ENCODE measurements at regions of chr17 and their contacts with region 1.

Region 1: DNA sequence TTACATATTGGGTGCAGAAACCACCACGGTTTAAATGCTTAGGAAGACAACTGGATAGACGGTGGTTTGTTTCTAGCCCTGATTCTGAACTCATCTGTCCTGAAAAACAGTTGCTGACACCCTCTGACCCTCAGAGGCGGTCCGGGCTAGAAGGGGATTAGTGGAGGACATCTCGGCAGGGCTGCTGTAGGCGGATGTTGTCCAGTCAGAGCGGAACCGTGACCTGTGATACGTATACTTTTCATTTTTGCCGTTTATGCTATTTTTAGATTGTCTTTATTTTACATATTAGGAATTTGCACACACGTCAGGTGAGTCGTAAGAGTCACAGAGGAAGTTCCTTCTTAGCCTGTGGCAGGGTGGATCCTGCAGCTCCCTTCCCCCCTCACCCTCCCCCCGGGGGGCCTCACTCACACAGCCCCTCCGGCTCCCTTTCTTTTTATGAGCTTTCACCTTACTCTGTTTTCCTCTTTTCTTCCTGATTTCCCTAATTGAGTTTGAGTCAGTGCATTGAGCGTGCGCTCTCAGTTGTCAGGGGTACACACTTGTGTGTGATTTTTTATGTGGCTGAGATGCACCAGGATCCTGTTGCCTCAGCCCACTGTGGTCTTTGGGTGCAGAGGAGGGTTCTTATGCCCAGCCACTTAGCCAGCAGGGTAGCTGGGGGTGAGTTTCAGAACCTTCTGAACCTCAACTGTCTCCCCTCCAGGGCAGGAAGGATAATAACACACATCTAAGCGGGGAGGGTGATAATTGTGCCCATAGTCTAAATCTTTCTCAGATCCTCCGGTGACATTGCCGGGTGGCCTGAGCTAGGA is 211.1 kb upstream of the CHMP6 start:
- DNase-seq: peak; percentile 38 to 75 (median 51)
- H3K4me3 ChIP-seq: peak overlapping the region in 1 of 3 experiments; percentile 44
- H3K4me3 Mint-ChIP-seq: peak overlapping the region; percentile 71 to 86
- H3K27ac ChIP-seq: peak overlapping the region; percentile 18 to 69
- H3K27ac Mint-ChIP-seq: peak overlapping the region; percentile 37 to 96 (median 79)
- H3K4me1 ChIP-seq: peaks cover 27 to 40% of the 10 kb centered on the region in 2 donors
- H3K4me1 Mint-ChIP-seq: peaks cover 35% of the 10 kb centered on the region
- H3K27me3 ChIP-seq: no peaks in the 10 kb centered on the region
- H3K27me3 Mint-ChIP-seq: peaks cover 0 to 4% (median 0%) of the 10 kb centered on the region in 3 donors
- CTCF ChIP-seq: no peak

Region 2: GRCh38 chr17:80468242-80468641 is 312.3 kb before region 1 on chr17:
- intact Hi-C with region 1: no loop called
- DNase-seq: no peak
- H3K4me3 ChIP-seq: no peak overlapping the region
- H3K4me3 Mint-ChIP-seq: peak overlapping the region in 1 of 2 donors; percentile 54
- H3K27ac ChIP-seq: no peak overlapping the region
- H3K27ac Mint-ChIP-seq: peak overlapping the region in 1 of 7 donors; percentile 55
- H3K4me1 ChIP-seq: no peaks in the 10 kb centered on the region
- H3K4me1 Mint-ChIP-seq: no peaks in the 10 kb centered on the region
- H3K27me3 ChIP-seq: peaks cover 2 to 52% of the 10 kb centered on the region in 2 donors
- H3K27me3 Mint-ChIP-seq: peaks cover 45 to 80% (median 54%) of the 10 kb centered on the region in 3 donors
- CTCF ChIP-seq: no peak

Region 3: DNA sequence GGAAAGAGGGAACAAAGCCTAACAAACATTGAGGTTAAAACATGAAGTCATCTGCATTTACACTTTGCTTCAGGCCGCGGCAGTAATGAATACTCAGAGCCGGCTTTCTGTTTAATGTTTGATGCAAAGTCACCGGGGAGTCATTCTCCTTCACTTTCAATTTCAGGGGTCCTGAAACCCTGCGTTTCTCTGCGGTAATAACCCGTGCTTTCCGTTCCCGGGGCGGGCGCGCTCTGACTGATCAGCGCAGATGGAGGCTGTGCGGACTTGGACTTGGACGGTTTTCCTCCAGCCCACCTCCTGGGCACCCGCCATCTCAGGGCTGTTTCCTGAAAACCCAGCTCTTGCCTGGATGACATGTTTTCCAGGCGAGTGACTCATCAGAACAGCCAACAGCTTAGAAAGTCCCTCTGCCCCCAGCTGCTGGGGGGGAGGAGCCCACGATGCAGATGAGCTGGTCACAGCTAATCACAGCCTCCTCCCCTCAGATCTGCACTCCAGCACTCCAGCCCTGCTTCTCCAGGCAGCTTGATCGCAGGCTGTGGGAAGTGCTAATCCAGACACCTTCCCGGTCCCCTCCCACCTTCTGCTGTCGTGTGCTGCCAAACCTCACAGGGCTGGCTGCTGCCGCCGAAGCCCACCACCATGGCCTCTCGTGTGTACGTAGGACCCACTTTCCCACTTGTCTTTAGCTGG is 52.4 kb after region 1 on chr17:
- intact Hi-C with region 1: loop called in 1 of 2 experiments (anchors 2 kb)
- DNase-seq: peak; percentile 91 to 98 (median 92)
- H3K4me3 ChIP-seq: peak overlapping the region; percentile 53 to 75 (median 66)
- H3K4me3 Mint-ChIP-seq: peak overlapping the region; percentile 91 to 93
- H3K27ac ChIP-seq: peak overlapping the region; percentile 60 to 91
- H3K27ac Mint-ChIP-seq: peak overlapping the region; percentile 93 to 99 (median 97)
- H3K4me1 ChIP-seq: peaks cover 13 to 15% of the 10 kb centered on the region in 2 donors
- H3K4me1 Mint-ChIP-seq: peaks cover 23% of the 10 kb centered on the region
- H3K27me3 ChIP-seq: no peaks in the 10 kb centered on the region
- H3K27me3 Mint-ChIP-seq: no peaks in the 10 kb centered on the region
- CTCF ChIP-seq: no peak

Region 4: GRCh38 chr17:80920441-80920840 is 139.9 kb after region 1 on chr17:
- intact Hi-C with region 1: no loop called
- DNase-seq: no peak
- H3K4me3 ChIP-seq: no peak overlapping the region
- H3K4me3 Mint-ChIP-seq: no peak overlapping the region
- H3K27ac ChIP-seq: no peak overlapping the region
- H3K27ac Mint-ChIP-seq: no peak overlapping the region
- H3K4me1 ChIP-seq: no peaks in the 10 kb centered on the region
- H3K4me1 Mint-ChIP-seq: no peaks in the 10 kb centered on the region
- H3K27me3 ChIP-seq: no peaks in the 10 kb centered on the region
- H3K27me3 Mint-ChIP-seq: peaks cover 0 to 2% (median 0%) of the 10 kb centered on the region in 3 donors
- CTCF ChIP-seq: no peak